WTC11 (cell line): ENCODE measurements at regions of chr20 and their contacts with region 1.

Region 1: GRCh38 chr20:39112178-39112743 is 150.1 kb downstream of the DHX35 start:
- DNase-seq: peak; percentile 69
- ATAC-seq: peak; percentile 87
- H3K4me3 Mint-ChIP-seq: peak overlapping the region; percentile 49
- H3K27ac Mint-ChIP-seq: no peak overlapping the region
- H3K4me1 Mint-ChIP-seq: peaks cover 52% of the 10 kb centered on the region
- H3K27me3 Mint-ChIP-seq: no peaks in the 10 kb centered on the region; the same call in 1 of the 2 replicates
- CTCF ChIP-seq: peak; percentile 68

Region 2: DNA sequence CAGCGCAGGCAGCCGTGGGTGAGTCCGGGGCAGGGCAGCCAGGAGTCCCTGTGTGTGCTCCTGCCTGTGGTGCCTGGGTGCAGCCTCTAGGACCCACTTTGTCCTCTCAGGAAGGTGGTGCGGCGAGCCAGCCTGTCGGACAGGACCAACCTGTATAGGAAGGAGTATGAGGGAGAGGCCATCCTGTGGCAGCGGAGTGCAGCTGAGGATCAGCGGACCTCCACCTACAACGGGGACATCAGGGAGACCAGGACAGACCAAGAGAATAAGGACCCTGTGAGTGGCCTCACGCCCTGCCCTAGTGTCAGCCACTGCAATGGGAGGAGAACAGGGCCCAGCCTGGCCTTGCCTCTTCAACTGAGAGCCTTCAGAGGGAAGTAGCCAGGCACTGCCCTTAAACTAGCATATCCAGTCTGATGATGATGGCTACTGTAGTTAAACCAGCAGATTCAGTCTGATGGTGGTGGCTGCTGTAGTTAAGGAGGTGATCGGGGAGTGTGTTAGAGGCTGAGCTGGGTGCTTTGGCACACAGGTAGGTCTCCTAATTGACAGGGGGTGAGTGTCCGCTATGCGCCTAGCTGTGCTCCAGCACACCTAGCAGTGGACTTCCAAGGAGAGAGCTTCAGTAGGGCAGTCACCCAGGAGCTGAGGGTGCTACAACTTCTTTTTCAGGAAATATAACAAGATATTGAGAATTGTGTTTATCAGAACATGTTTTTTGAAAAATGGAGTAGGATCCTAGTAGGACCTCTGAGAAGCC is 204.2 kb before region 1 on chr20:
- CTCF ChIA-PET with region 1: no interaction called
- POLR2A ChIA-PET with region 1: no interaction called
- DNase-seq: no peak
- ATAC-seq: no peak
- H3K4me3 Mint-ChIP-seq: no peak overlapping the region
- H3K27ac Mint-ChIP-seq: no peak overlapping the region
- H3K4me1 Mint-ChIP-seq: no peaks in the 10 kb centered on the region
- H3K27me3 Mint-ChIP-seq: no peaks in the 10 kb centered on the region
- CTCF ChIP-seq: no peak

Region 3: GRCh38 chr20:39124064-39124463 is 11.8 kb after region 1 on chr20:
- CTCF ChIA-PET with region 1: interaction called, 36 read pairs
- POLR2A ChIA-PET with region 1: no interaction called
- DNase-seq: no peak
- ATAC-seq: no peak
- H3K4me3 Mint-ChIP-seq: no peak overlapping the region
- H3K27ac Mint-ChIP-seq: no peak overlapping the region
- H3K4me1 Mint-ChIP-seq: peaks cover 29% of the 10 kb centered on the region
- H3K27me3 Mint-ChIP-seq: peaks cover 48% of the 10 kb centered on the region
- CTCF ChIP-seq: no peak

Region 4: GRCh38 chr20:39264506-39265172 is 152.4 kb after region 1 on chr20:
- CTCF ChIA-PET with region 1: interaction called, 47 read pairs
- POLR2A ChIA-PET with region 1: no interaction called
- DNase-seq: peak; percentile 66
- ATAC-seq: peak; percentile 69
- H3K4me3 Mint-ChIP-seq: no peak overlapping the region
- H3K27ac Mint-ChIP-seq: no peak overlapping the region
- H3K4me1 Mint-ChIP-seq: peaks cover 5% of the 10 kb centered on the region
- H3K27me3 Mint-ChIP-seq: no peaks in the 10 kb centered on the region
- CTCF ChIP-seq: peak; percentile 91

Region 5: GRCh38 chr20:39429716-39430115 is 317.5 kb after region 1 on chr20:
- CTCF ChIA-PET with region 1: interaction called, 29 read pairs
- POLR2A ChIA-PET with region 1: no interaction called
- DNase-seq: no peak
- ATAC-seq: peak; percentile 67; the same call in 1 of the 2 replicates
- H3K4me3 Mint-ChIP-seq: no peak overlapping the region
- H3K27ac Mint-ChIP-seq: no peak overlapping the region
- H3K4me1 Mint-ChIP-seq: no peaks in the 10 kb centered on the region
- H3K27me3 Mint-ChIP-seq: no peaks in the 10 kb centered on the region
- CTCF ChIP-seq: no peak; the same call in 1 of the 2 replicates